ENCODE measurements at regions of chr6 and their contacts with region 1.

Region 1: GRCh38 chr6:134720353-134721059 is 229.4 kb downstream of the ALDH8A1 start:
- DNase-seq: peak in 1 of 2 donors; percentile 59
- ATAC-seq: peak; percentile 67 to 85 (median 80)
- H3K4me3 ChIP-seq: no peak overlapping the region
- H3K27ac ChIP-seq: peak overlapping the region; percentile 23 to 87 (median 73)
- H3K4me1 ChIP-seq: peaks cover 8 to 79% (median 49%) of the 10 kb centered on the region in 9 donors
- H3K27me3 ChIP-seq: no peaks in the 10 kb centered on the region
- CTCF ChIP-seq: no peak

Region 2: DNA sequence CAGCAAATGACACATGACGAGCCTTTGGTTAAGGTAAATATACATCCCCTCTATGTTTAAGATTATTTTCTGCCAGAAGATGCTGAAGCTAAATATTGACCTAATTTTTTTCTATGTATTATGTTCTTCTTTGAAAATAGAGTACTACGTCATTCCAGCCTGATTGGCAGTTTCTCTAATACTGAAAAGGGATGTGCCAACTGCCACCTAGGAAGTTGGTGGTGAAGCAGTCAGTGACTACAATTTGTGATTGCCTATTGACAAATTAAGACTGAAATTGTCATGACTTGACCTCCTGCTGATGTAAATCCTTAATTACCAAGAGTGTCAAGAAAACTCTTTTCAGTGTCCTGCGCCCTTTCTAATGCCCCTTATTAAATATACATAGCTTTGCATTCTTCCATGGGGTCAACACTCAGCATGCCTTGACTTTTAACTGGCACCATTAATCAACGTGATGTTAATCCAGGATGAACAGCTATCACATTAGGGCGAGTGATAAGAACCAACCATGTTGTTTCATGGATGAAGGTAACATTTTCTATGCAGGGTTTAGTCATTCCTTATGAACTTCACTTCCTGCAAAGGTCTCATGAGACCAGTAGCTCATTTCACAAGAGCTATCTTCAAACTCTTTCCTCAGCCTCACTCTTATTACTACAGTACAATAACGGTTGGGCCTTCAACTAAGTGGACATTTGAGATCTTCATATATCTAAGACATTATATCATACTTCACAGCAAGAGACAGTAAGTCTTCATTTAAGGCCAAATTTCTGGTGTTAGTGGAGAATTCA is 380.1 kb before region 1 on chr6:
- intact Hi-C with region 1: loop called in 1 of 10 experiments (anchors 5 kb)
- DNase-seq: no peak
- ATAC-seq: no peak
- H3K4me3 ChIP-seq: no peak overlapping the region
- H3K27ac ChIP-seq: no peak overlapping the region
- H3K4me1 ChIP-seq: peaks cover 0 to 36% (median 11%) of the 10 kb centered on the region in 9 donors
- H3K27me3 ChIP-seq: no peaks in the 10 kb centered on the region
- CTCF ChIP-seq: no peak

Region 3: DNA sequence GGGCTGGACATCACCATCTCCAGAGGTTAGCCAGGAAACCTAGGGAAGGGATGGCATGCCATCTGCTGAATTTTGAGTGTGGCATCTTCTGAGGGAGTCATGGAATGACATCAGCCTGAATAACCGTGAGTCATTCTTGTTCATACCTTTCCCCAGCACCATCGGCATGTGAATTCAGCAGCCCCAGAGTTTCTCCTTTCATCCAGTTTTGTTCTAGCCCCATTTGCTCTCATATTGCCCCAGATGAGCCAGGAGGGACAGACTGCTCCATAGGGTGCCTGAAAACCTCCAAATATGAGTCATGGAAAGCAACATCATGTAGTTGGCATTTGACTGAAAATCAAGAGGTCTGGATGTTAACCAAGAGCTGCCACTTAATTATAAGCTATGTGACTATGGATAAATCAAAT is 183.4 kb before region 1 on chr6:
- intact Hi-C with region 1: loop called in 2 of 10 experiments (anchors 5 to 10 kb)
- DNase-seq: no peak
- ATAC-seq: no peak
- H3K4me3 ChIP-seq: no peak overlapping the region
- H3K27ac ChIP-seq: no peak overlapping the region
- H3K4me1 ChIP-seq: peaks cover 0 to 48% (median 16%) of the 10 kb centered on the region in 9 donors
- H3K27me3 ChIP-seq: no peaks in the 10 kb centered on the region
- CTCF ChIP-seq: no peak

Measured in heart right ventricle (tissue), 16 donors.